ENCODE measurements at regions of chr2 and their contacts with region 1.

Region 1: GRCh38 chr2:179307616-179308371 is 43.2 kb upstream of the SESTD1 start:
- DNase-seq: no peak
- H3K4me3 ChIP-seq: no peak overlapping the region
- H3K27ac ChIP-seq: no peak overlapping the region
- H3K4me1 ChIP-seq: no peaks in the 10 kb centered on the region
- H3K27me3 ChIP-seq: no peaks in the 10 kb centered on the region
- CTCF ChIP-seq: no peak

Region 2: GRCh38 chr2:179403624-179404023 is 95.8 kb after region 1 on chr2:
- CTCF ChIA-PET with region 1: no interaction called
- dilution Hi-C with region 1: loop called (anchors 5 kb)
- in situ Hi-C with region 1: no loop called
- intact Hi-C with region 1: no loop called
- DNase-seq: no peak
- H3K4me3 ChIP-seq: no peak overlapping the region
- H3K27ac ChIP-seq: no peak overlapping the region
- H3K4me1 ChIP-seq: no peaks in the 10 kb centered on the region
- H3K27me3 ChIP-seq: no peaks in the 10 kb centered on the region
- CTCF ChIP-seq: no peak

Measured in mammary epithelial cell (primary cell).